Aorta (tissue), 5 donors: ENCODE measurements at regions of chr12 and their contacts with region 1.

Region 1: GRCh38 chr12:103799870-103800771 is 40.9 kb downstream of the NT5DC3 start:
- DNase-seq: peak; percentile 81 to 85
- ATAC-seq: peak; percentile 84
- H3K4me3 ChIP-seq: no peak overlapping the region
- H3K27ac ChIP-seq: peak overlapping the region; percentile 12 to 72
- H3K4me1 ChIP-seq: peaks cover 0 to 2% of the 10 kb centered on the region in 2 donors
- H3K27me3 ChIP-seq: no peaks in the 10 kb centered on the region

Region 2: GRCh38 chr12:103829092-103829491 is 29.0 kb after region 1 on chr12:
- intact Hi-C with region 1: no loop called
- DNase-seq: no peak
- ATAC-seq: no peak
- H3K4me3 ChIP-seq: no peak overlapping the region
- H3K27ac ChIP-seq: no peak overlapping the region
- H3K4me1 ChIP-seq: peaks cover 1 to 8% of the 10 kb centered on the region in 2 donors
- H3K27me3 ChIP-seq: no peaks in the 10 kb centered on the region

Region 3: GRCh38 chr12:103860903-103861763 is 61.0 kb after region 1 on chr12:
- intact Hi-C with region 1: loop called in 1 of 2 experiments (anchors 10 kb)
- DNase-seq: no peak
- ATAC-seq: no peak
- H3K4me3 ChIP-seq: no peak overlapping the region
- H3K27ac ChIP-seq: peak overlapping the region in 1 of 2 donors; percentile 64
- H3K4me1 ChIP-seq: peaks cover 5 to 9% of the 10 kb centered on the region in 2 donors
- H3K27me3 ChIP-seq: no peaks in the 10 kb centered on the region